Right ventricle myocardium inferior (tissue), 1 donor: ENCODE measurements at regions of chr19 and their contacts with region 1.

Region 1: DNA sequence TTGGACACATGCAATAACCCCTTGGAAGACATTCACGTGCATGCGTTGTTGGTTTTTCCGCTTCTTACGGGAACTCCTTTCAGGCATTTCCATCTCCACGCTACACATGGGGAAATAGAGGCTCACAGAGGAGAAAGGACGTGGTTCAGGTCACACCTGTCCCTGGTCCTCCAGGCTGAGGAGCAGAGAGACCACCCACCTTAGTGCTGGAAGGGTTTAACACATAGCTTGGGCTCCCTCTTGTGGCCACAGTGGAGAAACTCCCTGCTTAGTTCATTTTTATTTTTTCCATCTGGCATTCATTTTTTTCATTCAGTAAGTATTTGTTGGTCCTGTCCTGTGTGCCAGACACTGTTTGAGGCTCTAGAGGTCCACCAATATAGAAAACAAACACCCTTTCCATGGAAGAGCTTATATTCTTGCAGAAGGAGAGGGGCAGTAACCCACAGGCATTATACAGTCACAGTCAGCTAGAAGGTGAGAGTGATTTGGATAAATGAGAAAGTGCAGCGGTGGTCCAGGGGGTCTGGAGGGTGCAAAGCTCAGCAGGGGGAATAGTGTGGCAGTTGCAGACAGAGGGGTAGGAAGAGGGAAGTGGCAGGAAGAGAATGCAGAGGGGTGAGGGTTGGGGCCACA is 24.2 kb upstream of the TTYH1 start:
- DNase-seq: no peak
- ATAC-seq: no peak

Region 2: DNA sequence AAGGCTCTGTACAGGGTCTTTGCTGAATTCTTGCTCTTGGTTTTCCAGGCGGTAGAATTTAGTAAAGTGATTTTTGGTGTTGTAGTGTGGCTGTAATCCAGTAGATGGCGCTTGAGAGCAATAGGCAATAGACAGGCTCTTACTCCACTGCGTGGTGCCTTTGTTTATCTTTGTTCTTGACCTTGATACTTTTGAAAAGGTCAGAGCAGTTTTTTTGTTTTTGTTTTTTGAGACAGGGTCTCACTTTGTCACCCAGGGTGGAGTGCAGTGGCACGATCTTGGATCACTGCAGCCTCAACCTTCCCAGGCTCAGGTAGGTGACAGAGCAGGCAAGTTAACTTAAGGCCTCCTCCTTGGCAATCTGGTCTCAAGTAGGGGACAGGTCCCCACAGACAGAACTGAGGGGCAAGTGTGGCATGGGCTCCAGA is 65.9 kb before region 1 on chr19:
- intact Hi-C with region 1: loop called (anchors 5 kb)
- DNase-seq: no peak
- ATAC-seq: no peak